MCF 10A (cell line): ENCODE measurements at regions of chr12 and their contacts with region 1.

Region 1: GRCh38 chr12:113048716-113049127 is 7.8 kb upstream of the DTX1 start:
- DNase-seq: peak; percentile 71
- H3K4me3 Mint-ChIP-seq: no peak overlapping the region
- H3K27ac Mint-ChIP-seq: no peak overlapping the region
- H3K4me1 Mint-ChIP-seq: no peaks in the 10 kb centered on the region
- H3K27me3 Mint-ChIP-seq: peaks cover 21% of the 10 kb centered on the region
- CTCF ChIP-seq: peak; percentile 56

Region 2: GRCh38 chr12:113005754-113006153 is 43.0 kb before region 1 on chr12:
- CTCF ChIA-PET with region 1: interaction called, 15 read pairs
- POLR2A ChIA-PET with region 1: no interaction called
- intact Hi-C with region 1: no loop called
- DNase-seq: peak; percentile 46
- H3K4me3 Mint-ChIP-seq: no peak overlapping the region
- H3K27ac Mint-ChIP-seq: no peak overlapping the region
- H3K4me1 Mint-ChIP-seq: peaks cover 7% of the 10 kb centered on the region
- H3K27me3 Mint-ChIP-seq: no peaks in the 10 kb centered on the region
- CTCF ChIP-seq: peak; percentile 31

Region 3: DNA sequence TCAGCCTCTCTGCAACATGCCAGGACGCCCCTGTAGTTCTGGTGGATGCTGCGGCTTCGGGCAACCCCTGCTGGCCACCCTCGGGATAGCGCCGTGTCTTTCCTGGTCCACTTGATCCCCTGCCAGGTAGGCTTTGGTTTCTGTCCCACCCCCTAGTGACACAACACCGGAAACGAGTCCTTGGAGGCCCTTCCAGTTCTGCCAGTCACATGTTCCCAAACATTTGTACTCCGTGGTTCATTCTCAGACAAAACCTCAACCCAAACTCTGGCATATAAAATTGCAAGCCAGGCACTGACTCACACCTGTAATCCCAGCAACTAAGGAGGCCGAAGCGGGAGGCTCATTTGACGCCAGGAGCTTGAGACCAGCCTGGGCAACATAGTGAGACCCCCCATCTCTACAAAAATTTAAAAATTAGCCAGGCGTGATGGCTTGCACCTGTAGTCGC is 49.7 kb after region 1 on chr12:
- CTCF ChIA-PET with region 1: interaction called, 18 read pairs
- POLR2A ChIA-PET with region 1: no interaction called
- intact Hi-C with region 1: loop called (anchors 1 kb)
- DNase-seq: peak; percentile 97
- H3K4me3 Mint-ChIP-seq: peak overlapping the region; percentile 10
- H3K27ac Mint-ChIP-seq: no peak overlapping the region
- H3K4me1 Mint-ChIP-seq: no peaks in the 10 kb centered on the region
- H3K27me3 Mint-ChIP-seq: no peaks in the 10 kb centered on the region
- CTCF ChIP-seq: peak; percentile 90

Region 4: GRCh38 chr12:113152835-113153814 is 104.4 kb after region 1 on chr12:
- CTCF ChIA-PET with region 1: interaction called, 45 read pairs
- POLR2A ChIA-PET with region 1: no interaction called
- intact Hi-C with region 1: loop called (anchors 1 kb)
- DNase-seq: peak; percentile 76
- H3K4me3 Mint-ChIP-seq: peak overlapping the region; percentile 65
- H3K27ac Mint-ChIP-seq: no peak overlapping the region
- H3K4me1 Mint-ChIP-seq: peaks cover 12% of the 10 kb centered on the region
- H3K27me3 Mint-ChIP-seq: peaks cover 14% of the 10 kb centered on the region
- CTCF ChIP-seq: peak; percentile 38

Region 5: GRCh38 chr12:113422030-113422885 is 373.5 kb after region 1 on chr12 and contains the start of gene SDSL:
- CTCF ChIA-PET with region 1: interaction called, 7 read pairs
- POLR2A ChIA-PET with region 1: no interaction called
- intact Hi-C with region 1: loop called (anchors 10 kb)
- DNase-seq: peak; percentile 96
- H3K4me3 Mint-ChIP-seq: peak within 1 kb of the TSS; percentile 91
- H3K27ac Mint-ChIP-seq: peak within 1 kb of the TSS; percentile 93
- H3K4me1 Mint-ChIP-seq: peaks cover 5% of the 10 kb centered on the region
- H3K27me3 Mint-ChIP-seq: no peaks in the 10 kb centered on the region
- CTCF ChIP-seq: no peak
- total RNA-seq, gene SDSL: 21.1 and 32.7 TPM in 2 replicates